PC-9 (cell line): ENCODE measurements at regions of chr1 and their contacts with region 1.

Region 1: GRCh38 chr1:41516168-41517061 is 31.9 kb upstream of the EDN2 start:
- DNase-seq: peak; percentile 62 to 96
- H3K4me3 ChIP-seq: peak overlapping the region; percentile 49; the same call in 1 of the 2 replicates
- H3K27ac ChIP-seq: peak overlapping the region; percentile 96
- H3K4me1 ChIP-seq: peaks cover 42% of the 10 kb centered on the region
- H3K27me3 ChIP-seq: no peaks in the 10 kb centered on the region
- CTCF ChIP-seq: peak; percentile 87

Region 2: GRCh38 chr1:41268154-41268770 is 248.2 kb before region 1 on chr1:
- CTCF ChIA-PET with region 1: no interaction called
- POLR2A ChIA-PET with region 1: no interaction called
- intact Hi-C with region 1: loop called (anchors 1 kb)
- DNase-seq: peak; percentile 50 to 81
- H3K4me3 ChIP-seq: no peak overlapping the region
- H3K27ac ChIP-seq: no peak overlapping the region
- H3K4me1 ChIP-seq: no peaks in the 10 kb centered on the region
- H3K27me3 ChIP-seq: no peaks in the 10 kb centered on the region
- CTCF ChIP-seq: peak; percentile 96

Region 3: GRCh38 chr1:41381692-41382477 is 134.5 kb before region 1 on chr1:
- CTCF ChIA-PET with region 1: interaction called, 3 read pairs
- POLR2A ChIA-PET with region 1: no interaction called
- intact Hi-C with region 1: loop called (anchors 1 kb)
- DNase-seq: peak in 1 of 2 experiments; percentile 81
- H3K4me3 ChIP-seq: peak overlapping the region; percentile 91
- H3K27ac ChIP-seq: peak overlapping the region; percentile 82
- H3K4me1 ChIP-seq: peaks cover 28% of the 10 kb centered on the region
- H3K27me3 ChIP-seq: no peaks in the 10 kb centered on the region
- CTCF ChIP-seq: no peak

Region 4: GRCh38 chr1:41432481-41433280 is 83.7 kb before region 1 on chr1:
- CTCF ChIA-PET with region 1: interaction called, 17 read pairs
- POLR2A ChIA-PET with region 1: interaction called, 5 read pairs
- intact Hi-C with region 1: loop called (anchors 1 kb)
- DNase-seq: peak; percentile 93 to 99
- H3K4me3 ChIP-seq: no peak overlapping the region
- H3K27ac ChIP-seq: peak overlapping the region; percentile 13; the same call in 1 of the 2 replicates
- H3K4me1 ChIP-seq: peaks cover 28% of the 10 kb centered on the region
- H3K27me3 ChIP-seq: no peaks in the 10 kb centered on the region
- CTCF ChIP-seq: peak; percentile 97

Region 5: GRCh38 chr1:41496080-41497055 is 20.0 kb before region 1 on chr1:
- CTCF ChIA-PET with region 1: interaction called, 17 read pairs
- POLR2A ChIA-PET with region 1: interaction called, 4 read pairs
- intact Hi-C with region 1: loop called (anchors 1 kb)
- DNase-seq: peak; percentile 82 to 94
- H3K4me3 ChIP-seq: peak overlapping the region; percentile 49; the same call in 1 of the 2 replicates
- H3K27ac ChIP-seq: peak overlapping the region; percentile 67
- H3K4me1 ChIP-seq: peaks cover 79% of the 10 kb centered on the region
- H3K27me3 ChIP-seq: no peaks in the 10 kb centered on the region
- CTCF ChIP-seq: no peak

Region 6: GRCh38 chr1:41902125-41902524 is 385.7 kb after region 1 on chr1:
- CTCF ChIA-PET with region 1: no interaction called
- POLR2A ChIA-PET with region 1: interaction called, 3 read pairs
- intact Hi-C with region 1: loop called (anchors 5 kb)
- DNase-seq: peak; percentile 87 to 91
- H3K4me3 ChIP-seq: peak overlapping the region; percentile 52; the same call in 1 of the 2 replicates
- H3K27ac ChIP-seq: peak overlapping the region; percentile 95
- H3K4me1 ChIP-seq: peaks cover 56% of the 10 kb centered on the region
- H3K27me3 ChIP-seq: no peaks in the 10 kb centered on the region
- CTCF ChIP-seq: no peak